ENCODE measurements at regions of chr10 and their contacts with region 1.

Region 1: DNA sequence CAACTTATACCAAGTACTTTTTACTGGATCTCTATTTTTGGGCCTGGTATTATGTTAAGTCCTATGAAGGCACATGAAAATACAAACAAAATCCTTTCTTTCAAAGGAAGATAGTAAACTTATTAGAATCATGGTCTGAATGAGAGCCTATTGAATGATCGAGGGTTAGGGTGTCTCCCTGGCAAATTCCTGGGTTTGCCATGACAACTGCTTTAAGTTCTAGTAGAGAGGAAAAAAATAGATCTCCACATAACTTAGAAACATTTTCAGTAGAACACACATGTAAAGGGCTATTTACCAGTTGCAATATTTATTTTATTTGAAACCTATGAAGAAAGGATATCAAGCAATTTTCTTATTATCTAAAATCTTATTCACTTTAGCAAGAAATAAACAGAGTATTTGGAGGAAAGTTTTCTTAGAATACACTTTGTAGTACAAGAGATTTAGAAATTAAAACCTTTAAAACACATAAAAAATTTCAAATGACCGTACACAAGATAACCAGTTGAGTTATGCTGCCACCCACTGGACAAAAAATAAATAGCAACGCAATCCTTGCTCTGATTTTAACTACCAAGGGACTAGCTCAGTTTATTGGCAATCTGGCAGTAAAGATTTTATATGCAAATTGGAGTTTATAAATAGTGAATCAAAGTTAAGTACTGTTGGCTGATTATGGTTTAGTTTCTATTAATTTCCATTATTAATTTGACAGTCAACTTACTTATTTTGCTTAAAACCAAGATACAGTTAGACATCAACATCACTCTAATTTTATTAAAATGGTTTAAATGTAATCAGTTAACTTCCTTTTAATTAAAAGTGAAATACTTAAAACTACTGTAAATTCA is 33.9 kb downstream of the CACUL1 start:
- DNase-seq: peak in 1 of 2 donors; percentile 74
- H3K4me3 ChIP-seq: no peak overlapping the region
- CTCF ChIP-seq: peak in 1 of 3 donors; percentile 33
- POLR2A ChIP-seq: no peak

Region 2: GRCh38 chr10:118568327-118568848 is 152.5 kb before region 1 on chr10:
- intact Hi-C with region 1: loop called (anchors 5 kb)
- DNase-seq: peak in 1 of 2 donors; percentile 58
- H3K4me3 ChIP-seq: no peak overlapping the region
- CTCF ChIP-seq: peak in 1 of 3 donors; percentile 93
- POLR2A ChIP-seq: no peak